PC-3 (cell line): ENCODE measurements at regions of chr9 and their contacts with region 1.

Region 1: DNA sequence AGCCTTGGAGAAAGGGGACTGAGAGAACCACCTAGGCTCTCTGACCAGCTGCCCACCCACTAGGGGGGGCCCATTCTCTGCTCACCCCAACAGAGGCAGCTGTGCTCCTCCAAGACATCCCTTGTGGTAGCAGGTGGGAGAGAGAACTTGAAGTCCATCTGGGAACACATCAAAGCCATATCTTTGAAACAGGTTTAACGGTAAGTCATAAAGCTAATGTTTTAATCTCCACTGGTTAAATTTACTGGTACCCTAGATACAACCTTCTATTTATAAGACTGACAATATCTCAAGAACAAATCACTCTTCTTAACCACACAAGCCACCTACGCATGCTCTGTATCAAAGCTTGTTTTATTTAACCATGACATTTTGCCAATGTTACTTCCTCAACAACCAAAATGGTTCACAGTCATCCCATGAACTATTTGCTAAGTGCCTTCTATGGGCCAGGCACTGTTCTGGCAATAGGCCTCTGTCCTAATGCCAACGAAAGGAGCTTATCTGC is 20.4 kb downstream of the AUH start:
- DNase-seq: no peak
- ATAC-seq: no peak
- H3K4me3 ChIP-seq: no peak overlapping the region
- H3K27ac ChIP-seq: no peak overlapping the region
- H3K4me1 ChIP-seq: peaks cover 16% of the 10 kb centered on the region
- H3K27me3 ChIP-seq: no peaks in the 10 kb centered on the region
- CTCF ChIP-seq: no peak; the same call in 1 of the 2 replicates

Region 2: GRCh38 chr9:90999425-91000397 is 341.6 kb before region 1 on chr9:
- CTCF ChIA-PET with region 1: no interaction called
- POLR2A ChIA-PET with region 1: no interaction called
- intact Hi-C with region 1: loop called (anchors 10 kb)
- DNase-seq: peak; percentile 58
- ATAC-seq: peak; percentile 49
- H3K4me3 ChIP-seq: no peak overlapping the region
- H3K27ac ChIP-seq: peak overlapping the region; percentile 94
- H3K4me1 ChIP-seq: peaks cover 34% of the 10 kb centered on the region
- H3K27me3 ChIP-seq: no peaks in the 10 kb centered on the region
- CTCF ChIP-seq: no peak

Region 3: DNA sequence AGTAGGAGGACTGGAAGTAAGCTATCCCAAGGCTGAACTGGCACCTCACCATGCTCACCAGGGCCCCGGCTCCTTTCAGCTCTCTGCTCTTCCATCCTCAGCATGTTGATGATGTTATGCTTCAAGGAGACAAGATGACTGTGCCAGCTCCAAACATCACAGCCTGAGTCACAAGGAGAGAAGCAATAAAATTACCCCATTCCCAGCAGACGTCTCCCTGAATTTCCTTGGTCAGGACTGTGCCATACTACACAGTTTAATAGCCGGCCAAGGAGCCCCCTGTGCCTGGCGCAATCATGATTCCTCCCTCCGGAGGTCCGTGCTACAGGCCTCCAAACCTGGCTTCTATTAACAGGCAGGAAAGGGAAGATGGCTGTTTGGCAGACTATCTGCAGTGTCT is 660.0 kb after region 1 on chr9:
- CTCF ChIA-PET with region 1: no interaction called
- POLR2A ChIA-PET with region 1: no interaction called
- intact Hi-C with region 1: no loop called
- DNase-seq: peak; percentile 5
- ATAC-seq: no peak
- H3K4me3 ChIP-seq: no peak overlapping the region
- H3K27ac ChIP-seq: no peak overlapping the region
- H3K4me1 ChIP-seq: no peaks in the 10 kb centered on the region
- H3K27me3 ChIP-seq: peaks cover 10% of the 10 kb centered on the region; the same call in 1 of the 2 replicates
- CTCF ChIP-seq: no peak